IMR-90 (cell line): ENCODE measurements at regions of chr14 and their contacts with region 1.

Region 1: GRCh38 chr14:20970983-20971704 is 15.9 kb downstream of the RNASE2 start:
- DNase-seq: peak; percentile 78
- ATAC-seq: peak; percentile 97
- H3K4me3 ChIP-seq: peak overlapping the region; percentile 57
- H3K27ac ChIP-seq: peak overlapping the region; percentile 33
- H3K4me1 ChIP-seq: peaks cover 5% of the 10 kb centered on the region; the same call in 1 of the 2 replicates
- H3K27me3 ChIP-seq: peaks cover 11% of the 10 kb centered on the region
- CTCF ChIP-seq: peak; percentile 97
- POLR2A ChIP-seq: no peak
- RAD21 ChIP-seq: peak; percentile 61

Region 2: GRCh38 chr14:20469242-20469889 is 501.8 kb before region 1 on chr14 and contains the start of gene PNP:
- CTCF ChIA-PET with region 1: no interaction called
- POLR2A ChIA-PET with region 1: no interaction called
- dilution Hi-C with region 1: no loop called
- in situ Hi-C with region 1: no loop called
- intact Hi-C with region 1: no loop called
- DNase-seq: peak; percentile 85
- ATAC-seq: peak; percentile 98
- H3K4me3 ChIP-seq: peak within 1 kb of the TSS; percentile 88
- H3K27ac ChIP-seq: peak within 1 kb of the TSS; percentile 58; the same call in 1 of the 2 replicates
- H3K4me1 ChIP-seq: peaks cover 4% of the 10 kb centered on the region; the same call in 1 of the 2 replicates
- H3K27me3 ChIP-seq: no peaks in the 10 kb centered on the region
- CTCF ChIP-seq: no peak
- POLR2A ChIP-seq: peak; percentile 98
- RAD21 ChIP-seq: no peak
- total RNA-seq, gene PNP: 60.3 and 68.8 TPM in 2 replicates

Region 3: DNA sequence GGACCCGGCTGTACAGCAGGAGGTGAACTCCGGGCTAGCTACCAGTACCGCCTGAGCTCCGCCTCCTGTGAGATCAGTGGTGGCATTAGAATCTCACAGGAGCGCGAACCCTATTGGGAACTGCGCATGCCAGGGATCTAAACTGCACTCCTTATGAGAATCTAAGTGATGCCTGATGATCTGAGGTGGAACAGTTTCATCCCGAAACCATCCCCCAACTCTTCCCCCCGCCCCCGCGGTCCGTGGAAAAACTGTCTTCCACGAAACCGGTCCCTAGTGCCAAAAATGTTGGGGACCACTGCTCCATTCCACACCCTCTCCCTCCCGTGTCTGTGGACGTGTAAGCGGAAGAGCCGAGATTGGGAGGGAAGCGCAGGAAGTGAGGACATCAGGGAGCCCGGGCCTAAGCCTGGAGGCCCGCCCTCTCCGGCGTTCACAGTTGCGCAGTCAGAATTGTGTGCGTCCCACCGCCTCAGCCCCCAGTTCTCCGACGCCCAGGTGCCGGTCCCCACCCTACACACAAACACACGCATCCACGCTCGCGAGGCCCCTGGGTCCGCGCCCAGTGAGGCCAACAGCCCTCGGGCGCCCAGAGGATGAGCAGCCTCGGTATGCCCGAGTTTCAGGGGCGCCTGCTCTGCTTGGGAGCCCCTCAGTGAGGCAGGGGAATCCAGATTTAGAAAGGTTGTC is 288.6 kb before region 1 on chr14:
- CTCF ChIA-PET with region 1: interaction called, 4 read pairs
- POLR2A ChIA-PET with region 1: no interaction called
- dilution Hi-C with region 1: no loop called
- in situ Hi-C with region 1: no loop called
- intact Hi-C with region 1: loop called (anchors 1 kb)
- DNase-seq: peak; percentile 92
- ATAC-seq: peak; percentile 67
- H3K4me3 ChIP-seq: peak overlapping the region; percentile 65
- H3K27ac ChIP-seq: peak overlapping the region; percentile 90
- H3K4me1 ChIP-seq: no peaks in the 10 kb centered on the region
- H3K27me3 ChIP-seq: no peaks in the 10 kb centered on the region
- CTCF ChIP-seq: no peak
- POLR2A ChIP-seq: peak; percentile 92
- RAD21 ChIP-seq: no peak

Region 4: GRCh38 chr14:20697273-20698017 is 273.7 kb before region 1 on chr14:
- CTCF ChIA-PET with region 1: interaction called, 4 read pairs
- POLR2A ChIA-PET with region 1: no interaction called
- dilution Hi-C with region 1: no loop called
- in situ Hi-C with region 1: loop called (anchors 10 kb)
- intact Hi-C with region 1: loop called (anchors 1 kb)
- DNase-seq: peak; percentile 75
- ATAC-seq: peak; percentile 91
- H3K4me3 ChIP-seq: no peak overlapping the region
- H3K27ac ChIP-seq: no peak overlapping the region
- H3K4me1 ChIP-seq: no peaks in the 10 kb centered on the region
- H3K27me3 ChIP-seq: no peaks in the 10 kb centered on the region
- CTCF ChIP-seq: peak; percentile 74
- POLR2A ChIP-seq: no peak
- RAD21 ChIP-seq: peak; percentile 74

Region 5: GRCh38 chr14:20956376-20956976 is 14.7 kb before region 1 on chr14:
- CTCF ChIA-PET with region 1: interaction called, 26 read pairs
- POLR2A ChIA-PET with region 1: no interaction called
- dilution Hi-C with region 1: no loop called
- in situ Hi-C with region 1: no loop called
- intact Hi-C with region 1: no loop called
- DNase-seq: no peak
- ATAC-seq: no peak
- H3K4me3 ChIP-seq: no peak overlapping the region
- H3K27ac ChIP-seq: no peak overlapping the region
- H3K4me1 ChIP-seq: no peaks in the 10 kb centered on the region
- H3K27me3 ChIP-seq: no peaks in the 10 kb centered on the region; the same call in none of the 2 replicates
- CTCF ChIP-seq: no peak
- POLR2A ChIP-seq: no peak
- RAD21 ChIP-seq: no peak